ENCODE measurements at regions of chr18 and their contacts with region 1.

Region 1: DNA sequence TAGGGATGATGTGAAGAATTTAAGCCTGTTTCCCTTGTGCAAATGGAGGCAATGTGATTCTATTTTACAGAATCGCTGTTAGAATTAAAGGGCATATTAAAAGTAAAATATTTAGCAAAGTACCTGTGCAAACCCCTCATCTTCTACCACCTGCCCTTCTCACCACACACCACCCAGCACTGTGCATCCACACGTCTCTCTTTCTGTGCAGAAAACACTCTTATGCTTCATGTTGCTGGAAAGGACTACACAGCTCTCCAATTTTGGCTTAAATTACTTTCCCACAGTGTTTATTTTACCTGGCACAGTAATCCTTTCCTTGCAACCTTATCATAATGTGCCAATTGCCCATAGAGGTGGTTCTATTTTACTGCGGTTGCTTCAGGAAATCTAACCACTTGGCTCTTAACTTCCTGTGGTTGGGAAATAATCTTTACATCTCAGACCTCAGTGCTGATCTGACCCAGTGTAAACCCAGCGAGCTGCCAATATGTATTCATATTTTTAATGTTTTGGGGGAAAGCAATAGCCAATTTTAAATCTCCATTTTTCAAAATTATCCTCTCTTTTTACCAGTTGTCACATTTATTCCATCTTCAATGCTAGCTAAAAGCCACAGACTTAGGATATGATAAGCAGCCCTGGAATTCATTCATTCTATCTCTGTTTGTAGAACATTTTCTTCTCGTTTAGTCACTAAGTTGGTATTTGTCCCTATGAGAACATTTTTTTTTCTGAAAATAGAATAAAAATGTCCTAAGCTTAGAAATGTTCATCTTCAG is 250.9 kb downstream of the DSEL start:
- DNase-seq: peak in 4 of 5 donors; percentile 38 to 46 (median 40)
- H3K4me3 ChIP-seq: no peak overlapping the region
- H3K4me3 Mint-ChIP-seq: peak overlapping the region in 7 of 8 donors; percentile 33 to 79 (median 65)
- H3K27ac ChIP-seq: no peak overlapping the region
- H3K27ac Mint-ChIP-seq: peak overlapping the region in 3 of 7 donors; percentile 9 to 42 (median 28)
- H3K4me1 ChIP-seq: peaks cover 26% of the 10 kb centered on the region
- H3K4me1 Mint-ChIP-seq: peaks cover 23 to 51% (median 36%) of the 10 kb centered on the region in 4 donors
- H3K27me3 ChIP-seq: no peaks in the 10 kb centered on the region
- H3K27me3 Mint-ChIP-seq: peaks cover 2 to 4% of the 10 kb centered on the region in 2 donors

Region 2: DNA sequence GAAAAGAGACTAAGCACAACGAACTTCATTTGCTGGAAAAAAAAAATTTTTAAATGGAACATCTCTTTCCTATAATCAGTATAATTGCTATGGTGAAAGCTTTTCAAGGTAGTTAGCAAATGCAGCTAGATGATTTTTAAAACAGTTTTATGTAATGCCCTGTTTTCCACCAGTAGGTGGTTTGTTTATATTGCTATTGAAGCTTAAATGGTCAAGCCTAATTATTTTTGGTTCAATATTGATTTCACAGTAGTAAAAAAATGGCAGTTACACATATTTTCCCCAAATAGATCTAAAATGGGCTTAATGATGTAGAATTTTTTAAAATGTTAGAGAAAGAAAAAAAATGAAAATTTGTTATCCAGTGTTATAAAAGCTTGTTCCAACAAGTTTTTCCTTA is 732.0 kb before region 1 on chr18:
- CTCF ChIA-PET with region 1: no interaction called
- POLR2A ChIA-PET with region 1: no interaction called
- intact Hi-C with region 1: no loop called
- DNase-seq: no peak
- H3K4me3 ChIP-seq: no peak overlapping the region
- H3K4me3 Mint-ChIP-seq: no peak overlapping the region
- H3K27ac ChIP-seq: no peak overlapping the region
- H3K27ac Mint-ChIP-seq: no peak overlapping the region
- H3K4me1 ChIP-seq: no peaks in the 10 kb centered on the region
- H3K4me1 Mint-ChIP-seq: no peaks in the 10 kb centered on the region
- H3K27me3 ChIP-seq: no peaks in the 10 kb centered on the region
- H3K27me3 Mint-ChIP-seq: no peaks in the 10 kb centered on the region

Region 3: DNA sequence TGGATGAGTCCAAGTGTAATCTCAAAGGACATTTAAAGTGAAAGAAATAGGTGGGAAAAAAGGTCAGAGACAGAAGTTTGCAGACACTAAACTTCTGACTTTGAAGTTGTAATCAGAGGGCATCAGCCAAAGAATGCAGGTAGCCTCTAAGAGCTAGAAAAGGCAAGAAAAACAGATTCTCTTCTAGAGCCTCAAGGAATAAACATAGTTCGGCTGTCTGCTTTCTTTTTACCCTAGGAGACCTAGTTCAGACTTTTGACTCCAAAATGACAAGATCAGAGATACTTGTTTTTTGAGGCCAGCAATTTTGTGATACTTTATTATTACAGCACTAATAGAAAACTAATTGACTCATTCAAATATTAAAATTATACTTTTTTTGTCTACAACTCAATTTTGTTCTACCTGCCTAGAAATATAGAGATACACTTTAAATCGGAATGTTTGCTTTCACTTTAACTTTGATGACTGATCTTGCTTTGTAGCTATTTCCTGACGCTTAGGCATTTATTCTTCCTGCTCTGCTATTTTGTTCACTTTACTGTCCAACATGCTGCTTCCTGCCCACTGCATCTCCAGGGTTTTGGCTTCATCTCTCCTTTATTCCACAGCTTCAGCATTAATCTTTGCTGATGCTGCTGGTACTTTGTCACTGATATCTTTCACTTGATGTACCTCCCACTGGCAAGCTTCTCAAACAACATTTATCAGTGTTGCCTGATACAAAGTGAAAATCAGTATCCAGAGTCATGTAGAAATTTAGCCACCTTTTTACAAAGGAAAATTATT is 21.7 kb before region 1 on chr18:
- CTCF ChIA-PET with region 1: no interaction called
- POLR2A ChIA-PET with region 1: no interaction called
- intact Hi-C with region 1: no loop called
- DNase-seq: peak in 1 of 5 donors; percentile 7
- H3K4me3 ChIP-seq: peak overlapping the region in 1 of 2 donors; percentile 13
- H3K4me3 Mint-ChIP-seq: peak overlapping the region; percentile 81 to 93 (median 89)
- H3K27ac ChIP-seq: peak overlapping the region; percentile 22
- H3K27ac Mint-ChIP-seq: peak overlapping the region; percentile 19 to 94 (median 62)
- H3K4me1 ChIP-seq: peaks cover 19% of the 10 kb centered on the region
- H3K4me1 Mint-ChIP-seq: peaks cover 17 to 37% (median 24%) of the 10 kb centered on the region in 4 donors
- H3K27me3 ChIP-seq: no peaks in the 10 kb centered on the region
- H3K27me3 Mint-ChIP-seq: no peaks in the 10 kb centered on the region

Region 4: DNA sequence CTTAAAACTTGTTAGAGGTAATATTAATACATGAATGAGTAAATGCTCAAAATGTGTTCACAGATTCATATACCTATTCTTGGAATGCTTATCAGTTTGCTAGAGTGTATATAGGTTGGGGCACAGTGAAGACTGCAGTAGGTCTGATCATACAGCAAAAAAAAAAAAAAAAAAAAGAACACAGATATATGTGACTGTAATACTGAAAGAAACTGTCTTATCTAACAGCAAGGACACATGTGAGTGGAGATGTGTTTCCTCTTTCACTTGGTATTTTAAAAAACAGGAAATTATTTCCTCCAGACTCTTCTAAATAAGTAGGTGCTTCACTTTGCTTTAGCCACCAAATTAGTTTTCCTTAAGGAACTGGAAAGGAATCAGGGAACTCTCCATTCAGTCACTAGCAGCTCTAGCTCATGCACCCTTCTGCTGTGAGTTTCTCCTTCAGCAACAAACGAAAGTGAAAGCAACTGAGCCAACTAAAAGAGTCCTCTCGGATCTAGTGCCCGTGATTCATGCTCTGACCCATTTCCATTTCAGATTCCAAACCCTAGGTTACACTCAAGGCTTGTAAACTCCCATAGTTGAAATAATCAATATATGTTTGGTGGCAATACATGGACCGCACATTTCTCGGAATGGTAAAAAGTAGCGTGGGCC is 152.3 kb after region 1 on chr18:
- CTCF ChIA-PET with region 1: no interaction called
- POLR2A ChIA-PET with region 1: no interaction called
- intact Hi-C with region 1: loop called (anchors 10 kb)
- DNase-seq: peak; percentile 31 to 45 (median 41)
- H3K4me3 ChIP-seq: peak overlapping the region; percentile 15 to 50
- H3K4me3 Mint-ChIP-seq: peak overlapping the region; percentile 73 to 85 (median 78)
- H3K27ac ChIP-seq: peak overlapping the region; percentile 6
- H3K27ac Mint-ChIP-seq: peak overlapping the region; percentile 8 to 79 (median 73)
- H3K4me1 ChIP-seq: peaks cover 6% of the 10 kb centered on the region
- H3K4me1 Mint-ChIP-seq: peaks cover 3 to 19% (median 9%) of the 10 kb centered on the region in 4 donors
- H3K27me3 ChIP-seq: no peaks in the 10 kb centered on the region
- H3K27me3 Mint-ChIP-seq: no peaks in the 10 kb centered on the region